Naive thymus-derived CD4-positive, alpha-beta T cell (primary cell): ENCODE measurements at regions of chr6 and their contacts with region 1.

Region 1: DNA sequence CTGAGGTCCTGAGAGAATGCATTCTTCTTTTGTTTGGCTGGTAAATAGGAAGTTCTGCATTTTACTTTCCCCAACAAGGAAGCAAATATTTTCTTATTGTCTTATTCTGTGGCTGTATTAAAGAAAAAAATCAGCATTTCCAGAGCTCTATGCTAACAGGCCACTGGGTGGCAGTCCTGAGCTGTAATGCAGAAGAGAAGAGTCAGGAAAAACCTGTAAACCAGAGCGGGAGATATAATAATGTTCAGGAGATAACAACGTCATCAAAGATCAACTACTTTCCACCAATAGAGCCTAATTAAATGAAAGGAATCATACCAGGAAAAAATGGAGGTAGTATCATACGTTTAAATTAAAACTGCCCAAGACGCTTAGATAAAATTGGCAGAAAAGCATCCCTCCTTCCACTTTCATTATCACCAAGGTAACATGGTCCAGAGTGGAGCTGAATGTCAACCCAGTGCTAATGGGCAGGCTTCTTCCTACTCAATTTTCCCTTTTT is 55.6 kb upstream of the CARMIL1 start:
- DNase-seq: peak; percentile 32 to 63 (median 58)
- ATAC-seq: peak; percentile 78
- H3K4me3 ChIP-seq: peak overlapping the region; percentile 16
- H3K4me3 Mint-ChIP-seq: peak overlapping the region; percentile 31 to 85 (median 67)
- H3K27ac ChIP-seq: no peak overlapping the region
- H3K27ac Mint-ChIP-seq: no peak overlapping the region
- H3K4me1 ChIP-seq: peaks cover 0 to 6% of the 10 kb centered on the region in 2 donors
- H3K4me1 Mint-ChIP-seq: peaks cover 9 to 14% (median 11%) of the 10 kb centered on the region in 7 donors
- H3K27me3 ChIP-seq: no peaks in the 10 kb centered on the region
- H3K27me3 Mint-ChIP-seq: peaks cover 0 to 22% (median 8%) of the 10 kb centered on the region in 5 donors

Region 2: GRCh38 chr6:25263657-25264056 is 40.1 kb after region 1 on chr6:
- CTCF ChIA-PET with region 1: interaction called, 14 read pairs
- POLR2A ChIA-PET with region 1: no interaction called
- intact Hi-C with region 1: loop called (anchors 1 kb)
- DNase-seq: no peak
- ATAC-seq: no peak
- H3K4me3 ChIP-seq: no peak overlapping the region
- H3K4me3 Mint-ChIP-seq: no peak overlapping the region
- H3K27ac ChIP-seq: no peak overlapping the region
- H3K27ac Mint-ChIP-seq: no peak overlapping the region
- H3K4me1 ChIP-seq: no peaks in the 10 kb centered on the region
- H3K4me1 Mint-ChIP-seq: peaks cover 0 to 4% (median 3%) of the 10 kb centered on the region in 7 donors
- H3K27me3 ChIP-seq: no peaks in the 10 kb centered on the region
- H3K27me3 Mint-ChIP-seq: peaks cover 0 to 25% (median 3%) of the 10 kb centered on the region in 5 donors

Region 3: DNA sequence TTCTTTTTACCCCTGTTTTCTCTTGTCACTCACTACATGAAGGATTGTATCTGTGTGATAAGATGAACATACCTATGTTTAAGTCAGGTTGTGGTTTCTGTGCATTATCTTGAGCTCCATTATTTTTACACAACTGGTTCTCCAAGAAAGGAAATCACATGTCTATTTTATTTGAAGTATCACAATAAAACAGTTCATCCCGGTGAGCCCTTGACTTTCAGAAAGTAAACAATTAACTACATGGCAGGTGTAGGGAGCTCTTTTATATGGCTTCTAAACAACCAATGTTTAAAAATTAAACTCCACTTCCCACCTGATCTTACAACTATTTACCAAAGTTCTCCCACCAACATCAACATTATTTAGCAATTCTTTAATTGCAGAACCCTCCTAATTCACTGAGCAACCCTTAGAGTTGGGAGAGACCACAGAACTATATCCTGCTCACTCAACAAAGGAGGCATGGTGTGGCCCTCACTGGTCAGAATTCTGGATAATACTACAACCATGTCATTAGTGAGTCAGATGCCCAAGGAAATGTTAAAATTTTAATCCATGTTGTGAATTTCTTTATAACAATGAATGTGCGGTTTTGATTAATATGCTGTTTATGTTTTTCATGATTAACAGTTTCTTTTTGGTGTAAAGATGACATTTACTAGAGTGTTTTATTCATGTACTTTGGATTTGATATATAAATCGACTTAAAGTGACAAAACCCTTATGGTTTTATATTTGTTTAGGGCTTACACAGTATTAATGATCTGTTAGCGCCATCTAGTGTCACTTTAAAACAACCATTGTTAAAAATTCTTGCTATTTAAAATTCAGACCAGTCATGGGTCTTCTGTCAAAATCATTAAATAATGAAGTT is 378.5 kb after region 1 on chr6:
- CTCF ChIA-PET with region 1: interaction called, 19 read pairs
- POLR2A ChIA-PET with region 1: no interaction called
- intact Hi-C with region 1: loop called (anchors 1 kb)
- DNase-seq: peak in 6 of 9 donors; percentile 3 to 48 (median 35)
- ATAC-seq: peak; percentile 64
- H3K4me3 ChIP-seq: no peak overlapping the region
- H3K4me3 Mint-ChIP-seq: no peak overlapping the region
- H3K27ac ChIP-seq: no peak overlapping the region
- H3K27ac Mint-ChIP-seq: peak overlapping the region in 2 of 9 donors; percentile 17 to 18
- H3K4me1 ChIP-seq: no peaks in the 10 kb centered on the region
- H3K4me1 Mint-ChIP-seq: peaks cover 0 to 19% (median 9%) of the 10 kb centered on the region in 7 donors
- H3K27me3 ChIP-seq: no peaks in the 10 kb centered on the region
- H3K27me3 Mint-ChIP-seq: no peaks in the 10 kb centered on the region

Region 4: DNA sequence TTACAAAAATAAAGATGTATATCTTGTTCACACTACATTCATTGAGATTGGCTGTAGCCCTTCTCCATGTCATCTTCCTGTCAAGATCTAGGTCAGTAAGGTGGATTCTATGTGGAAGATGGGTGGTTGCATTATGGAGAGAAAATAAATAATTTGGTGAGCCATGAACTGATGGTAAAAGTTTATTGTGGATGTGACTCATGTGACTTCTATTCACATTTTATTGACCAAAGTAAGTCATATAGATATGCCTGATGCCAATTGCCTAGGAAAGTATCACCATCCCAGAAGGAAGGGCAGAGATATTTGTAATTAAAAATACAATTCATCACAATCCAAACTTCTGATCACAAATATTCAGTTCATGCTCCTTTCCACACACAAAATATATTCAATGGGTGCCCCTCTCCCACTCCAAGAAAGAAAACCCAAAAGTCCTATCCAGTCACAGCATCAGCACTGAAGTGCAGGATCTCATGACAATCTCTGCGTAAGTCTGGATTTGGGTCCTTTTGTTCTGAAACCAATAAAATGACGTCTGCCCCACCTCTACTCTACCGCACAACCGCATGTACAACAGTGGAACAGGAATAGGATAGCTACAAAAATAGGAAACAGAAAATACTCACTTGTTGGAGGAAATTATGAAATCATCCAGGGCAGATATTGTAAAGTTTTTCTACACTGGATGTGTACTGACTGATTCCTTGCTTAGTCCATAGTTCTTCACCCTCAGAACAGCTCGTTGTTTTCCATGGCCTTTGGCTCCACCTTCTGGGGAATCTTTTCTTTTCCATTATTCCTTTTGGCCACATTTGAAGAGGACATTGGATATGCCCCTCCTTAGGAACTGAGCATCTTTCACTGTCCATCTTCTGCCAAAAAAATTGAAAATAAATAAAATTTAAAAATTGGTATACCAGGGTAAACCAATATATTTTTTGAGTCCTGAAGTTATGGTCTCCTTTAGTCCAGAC is 666.6 kb after region 1 on chr6:
- CTCF ChIA-PET with region 1: no interaction called
- POLR2A ChIA-PET with region 1: no interaction called
- intact Hi-C with region 1: loop called in 1 of 2 experiments (anchors 1 kb)
- DNase-seq: peak in 3 of 9 donors; percentile 7 to 14 (median 11)
- ATAC-seq: peak; percentile 44
- H3K4me3 ChIP-seq: no peak overlapping the region
- H3K4me3 Mint-ChIP-seq: no peak overlapping the region
- H3K27ac ChIP-seq: no peak overlapping the region
- H3K27ac Mint-ChIP-seq: peak overlapping the region in 1 of 9 donors; percentile 58
- H3K4me1 ChIP-seq: no peaks in the 10 kb centered on the region
- H3K4me1 Mint-ChIP-seq: peaks cover 0 to 1% (median 0%) of the 10 kb centered on the region in 7 donors
- H3K27me3 ChIP-seq: no peaks in the 10 kb centered on the region
- H3K27me3 Mint-ChIP-seq: peaks cover 0 to 14% (median 3%) of the 10 kb centered on the region in 5 donors

Region 5: GRCh38 chr6:26003102-26003694 is 779.7 kb after region 1 on chr6:
- CTCF ChIA-PET with region 1: no interaction called
- POLR2A ChIA-PET with region 1: no interaction called
- intact Hi-C with region 1: loop called in 1 of 2 experiments (anchors 5 kb)
- DNase-seq: peak in 6 of 9 donors; percentile 34 to 44 (median 38)
- ATAC-seq: peak; percentile 63
- H3K4me3 ChIP-seq: no peak overlapping the region
- H3K4me3 Mint-ChIP-seq: no peak overlapping the region
- H3K27ac ChIP-seq: no peak overlapping the region
- H3K27ac Mint-ChIP-seq: no peak overlapping the region
- H3K4me1 ChIP-seq: no peaks in the 10 kb centered on the region
- H3K4me1 Mint-ChIP-seq: peaks cover 4 to 15% (median 10%) of the 10 kb centered on the region in 7 donors
- H3K27me3 ChIP-seq: no peaks in the 10 kb centered on the region
- H3K27me3 Mint-ChIP-seq: no peaks in the 10 kb centered on the region